SK-N-SH (cell line): ENCODE measurements at regions of chrX and their contacts with region 1.

Region 1: GRCh38 chrX:120463241-120463640 is 5.9 kb downstream of the LAMP2 start:
- DNase-seq: no peak
- H3K4me3 ChIP-seq: no peak overlapping the region
- H3K27ac ChIP-seq: no peak overlapping the region
- H3K4me1 ChIP-seq: peaks cover 3 to 6% of the 10 kb centered on the region in 2 experiments; a peak in 2 of 4 replicates
- H3K27me3 ChIP-seq: no peaks in the 10 kb centered on the region
- CTCF ChIP-seq: no peak
- EP300 ChIP-seq: no peak
- RAD21 ChIP-seq: no peak

Region 2: GRCh38 chrX:120452131-120452530 is 11.1 kb before region 1 on chrX:
- CTCF ChIA-PET with region 1: interaction called, 18 read pairs
- POLR2A ChIA-PET with region 1: no interaction called
- DNase-seq: peak; percentile 50
- H3K4me3 ChIP-seq: no peak overlapping the region
- H3K27ac ChIP-seq: no peak overlapping the region
- H3K4me1 ChIP-seq: peaks cover 0 to 3% of the 10 kb centered on the region in 2 experiments; a peak in 1 of 4 replicates
- H3K27me3 ChIP-seq: no peaks in the 10 kb centered on the region
- CTCF ChIP-seq: peak; percentile 69
- EP300 ChIP-seq: no peak
- RAD21 ChIP-seq: peak; percentile 60

Region 3: DNA sequence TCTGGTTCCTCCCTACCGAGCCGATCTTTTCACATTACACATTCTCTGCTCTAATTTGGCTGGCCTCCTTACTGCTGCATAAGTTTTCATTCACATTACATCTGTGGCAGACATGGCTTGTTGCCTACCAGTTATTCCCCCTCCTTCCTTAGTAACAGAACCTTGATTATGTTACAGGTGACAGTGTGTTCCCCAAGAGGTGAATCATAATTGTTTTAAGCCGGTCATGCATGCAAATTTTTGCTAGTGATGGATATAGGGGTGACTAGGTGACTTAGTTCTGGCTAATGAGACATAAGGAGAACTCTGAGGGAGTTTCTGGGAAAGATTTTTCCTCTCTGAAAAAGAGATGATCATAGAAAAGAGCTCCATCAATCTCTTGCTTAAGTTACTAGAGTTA is 14.2 kb after region 1 on chrX:
- CTCF ChIA-PET with region 1: interaction called, 18 read pairs
- POLR2A ChIA-PET with region 1: no interaction called
- DNase-seq: no peak
- H3K4me3 ChIP-seq: no peak overlapping the region
- H3K27ac ChIP-seq: no peak overlapping the region
- H3K4me1 ChIP-seq: no peaks in the 10 kb centered on the region
- H3K27me3 ChIP-seq: peaks cover 4% of the 10 kb centered on the region; the same call in 1 of the 2 replicates
- CTCF ChIP-seq: no peak
- EP300 ChIP-seq: no peak
- RAD21 ChIP-seq: no peak

Region 4: DNA sequence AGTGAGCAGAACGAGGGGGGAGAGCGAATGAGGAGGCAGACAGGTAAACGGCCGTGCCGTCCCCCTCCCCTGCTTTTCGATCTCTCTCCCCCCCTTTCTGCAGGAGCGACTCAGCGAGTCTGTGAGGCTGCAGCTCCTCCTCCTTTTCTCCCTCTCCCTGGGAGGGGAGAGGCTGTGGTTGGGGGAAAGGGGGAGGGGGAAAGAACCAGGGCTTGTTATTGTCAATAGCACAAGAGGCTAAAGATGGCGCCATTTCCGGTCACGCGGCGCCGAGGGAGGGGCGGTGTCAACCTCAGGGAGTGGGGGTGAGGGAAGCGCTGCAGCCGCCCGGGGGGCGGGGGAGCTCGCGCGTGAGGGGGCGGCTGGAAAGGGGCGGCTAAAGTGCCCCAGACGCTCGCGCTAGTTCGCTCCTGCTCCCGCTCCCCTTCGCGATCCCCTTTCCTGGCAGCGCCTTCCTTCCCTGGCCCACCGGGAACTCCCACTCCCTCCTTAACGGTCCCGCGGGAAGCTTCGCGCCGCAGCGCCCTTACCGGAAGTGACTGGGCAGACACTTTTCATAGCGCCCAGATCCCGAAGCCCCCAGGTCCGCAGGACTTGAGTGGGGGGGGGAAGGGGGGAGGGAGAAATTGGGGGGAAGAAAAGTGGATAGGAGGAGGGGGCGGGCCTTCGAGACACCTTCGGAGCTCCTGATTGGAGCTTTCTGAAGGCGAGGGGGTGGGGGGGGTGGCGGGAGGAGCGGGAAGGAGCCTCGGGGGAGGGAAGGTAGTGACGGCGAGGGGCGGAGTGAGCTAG is 97.8 kb after region 1 on chrX and contains the start of gene CUL4B:
- CTCF ChIA-PET with region 1: no interaction called
- POLR2A ChIA-PET with region 1: no interaction called
- DNase-seq: peak; percentile 88
- H3K4me3 ChIP-seq: peak within 1 kb of the TSS; percentile 77 to 78
- H3K27ac ChIP-seq: peak within 1 kb of the TSS; percentile 96
- H3K4me1 ChIP-seq: peaks cover 0 to 4% of the 10 kb centered on the region in 2 experiments; a peak in 2 of 4 replicates
- H3K27me3 ChIP-seq: no peaks in the 10 kb centered on the region
- CTCF ChIP-seq: no peak
- EP300 ChIP-seq: peak in 1 of 2 experiments; percentile 38; a peak in 1 of 4 replicates
- RAD21 ChIP-seq: no peak
- polyA plus RNA-seq, gene CUL4B: 24.1 and 42.6 TPM in 2 replicates